Ascending aorta (tissue), 2 donors: ENCODE measurements at regions of chr1 and their contacts with region 1.

Region 1: GRCh38 chr1:109910123-109910962 is at the start of gene CSF1:
- DNase-seq: peak; percentile 55 to 88
- H3K4me3 ChIP-seq: peak within 1 kb of the TSS; percentile 64 to 82
- H3K27ac ChIP-seq: peak within 1 kb of the TSS; percentile 77 to 84
- H3K4me1 ChIP-seq: peaks cover 5 to 40% of the 10 kb centered on the region in 2 donors
- H3K27me3 ChIP-seq: no peaks in the 10 kb centered on the region
- CTCF ChIP-seq: no peak
- total RNA-seq, gene CSF1: 140 TPM

Region 2: DNA sequence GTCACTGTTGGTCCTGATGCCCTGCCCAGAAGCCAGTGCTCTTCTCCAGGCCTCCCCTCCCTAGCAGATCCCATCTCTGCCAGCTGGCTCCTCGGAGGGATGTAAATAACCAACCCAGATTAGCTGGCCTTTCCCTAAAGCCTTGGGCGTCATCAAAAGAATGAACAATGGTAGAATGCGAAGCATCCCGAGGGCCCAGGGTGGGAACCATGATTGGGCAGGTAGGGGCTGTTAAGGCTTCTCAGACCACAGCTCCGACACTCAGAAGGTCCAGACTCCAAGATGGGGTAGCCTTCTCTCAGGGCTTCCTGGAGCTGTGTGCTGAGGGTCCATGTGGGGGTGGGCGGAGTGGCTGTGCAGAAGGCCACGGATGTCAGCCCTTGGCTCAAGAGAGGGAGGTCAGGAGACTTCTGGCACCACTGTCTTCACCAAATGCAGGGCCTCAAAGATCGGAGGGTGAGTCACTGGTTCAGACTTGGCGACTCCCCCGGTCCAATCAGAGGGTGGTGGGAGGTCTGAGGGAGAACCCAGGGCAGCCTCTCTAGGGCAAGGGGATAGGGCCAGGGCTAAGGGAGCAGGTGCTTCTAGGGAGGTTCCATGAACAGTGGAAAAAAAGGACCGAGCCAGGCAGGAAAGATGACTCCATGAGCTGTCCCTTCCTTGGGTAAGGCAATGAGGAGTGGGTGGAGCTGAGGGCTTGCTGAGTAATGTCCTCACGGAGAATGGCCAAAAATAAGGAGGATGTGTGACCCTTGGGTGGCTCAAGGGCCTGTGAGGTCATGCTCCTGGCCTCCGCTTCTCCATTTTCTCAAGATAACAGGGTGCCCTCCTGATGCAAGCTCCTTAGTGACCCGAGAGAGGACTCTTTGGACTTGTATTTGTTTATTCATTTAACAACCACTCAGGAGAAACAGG is 88.3 kb before region 1 on chr1:
- intact Hi-C with region 1: loop called (anchors 2 kb)
- DNase-seq: peak; percentile 47 to 86
- H3K4me3 ChIP-seq: no peak overlapping the region
- H3K27ac ChIP-seq: peak overlapping the region; percentile 83 to 94
- H3K4me1 ChIP-seq: peaks cover 22 to 54% of the 10 kb centered on the region in 2 donors
- H3K27me3 ChIP-seq: no peaks in the 10 kb centered on the region
- CTCF ChIP-seq: no peak

Region 3: GRCh38 chr1:109877320-109877771 is 33.0 kb before region 1 on chr1:
- intact Hi-C with region 1: loop called (anchors 2 kb)
- DNase-seq: peak in 1 of 2 donors; percentile 89
- H3K4me3 ChIP-seq: peak overlapping the region in 1 of 2 donors; percentile 42
- H3K27ac ChIP-seq: peak overlapping the region; percentile 93 to 94
- H3K4me1 ChIP-seq: peaks cover 11 to 37% of the 10 kb centered on the region in 2 donors
- H3K27me3 ChIP-seq: no peaks in the 10 kb centered on the region
- CTCF ChIP-seq: peak; percentile 30 to 46 (median 37)

Region 4: DNA sequence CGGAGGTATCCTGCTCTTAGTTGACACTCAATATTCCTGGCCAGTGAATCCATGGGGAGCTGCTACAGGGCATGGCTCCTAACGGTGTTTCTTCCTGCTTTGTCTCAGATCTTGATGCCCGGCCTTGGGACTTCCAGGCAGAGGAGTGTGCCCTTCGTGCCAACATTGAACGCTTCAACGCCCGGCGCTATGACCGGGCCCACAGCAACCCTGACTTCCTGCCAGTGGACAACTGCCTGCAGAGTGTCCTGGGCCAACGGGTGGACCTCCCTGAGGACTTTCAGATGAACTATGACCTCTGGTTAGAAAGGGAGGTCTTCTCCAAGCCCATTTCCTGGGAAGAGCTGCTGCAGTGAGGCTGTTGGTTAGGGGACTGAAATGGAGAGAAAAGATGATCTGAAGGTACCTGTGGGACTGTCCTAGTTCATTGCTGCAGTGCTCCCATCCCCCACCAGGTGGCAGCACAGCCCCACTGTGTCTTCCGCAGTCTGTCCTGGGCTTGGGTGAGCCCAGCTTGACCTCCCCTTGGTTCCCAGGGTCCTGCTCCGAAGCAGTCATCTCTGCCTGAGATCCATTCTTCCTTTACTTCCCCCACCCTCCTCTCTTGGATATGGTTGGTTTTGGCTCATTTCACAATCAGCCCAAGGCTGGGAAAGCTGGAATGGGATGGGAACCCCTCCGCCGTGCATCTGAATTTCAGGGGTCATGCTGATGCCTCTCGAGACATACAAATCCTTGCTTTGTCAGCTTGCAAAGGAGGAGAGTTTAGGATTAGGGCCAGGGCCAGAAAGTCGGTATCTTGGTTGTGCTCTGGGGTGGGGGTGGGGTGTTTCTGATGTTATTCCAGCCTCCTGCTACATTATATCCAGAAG is 143.4 kb after region 1 on chr1:
- intact Hi-C with region 1: no loop called
- DNase-seq: peak in 1 of 2 donors; percentile 74
- H3K4me3 ChIP-seq: no peak overlapping the region
- H3K27ac ChIP-seq: no peak overlapping the region
- H3K4me1 ChIP-seq: no peaks in the 10 kb centered on the region
- H3K27me3 ChIP-seq: no peaks in the 10 kb centered on the region
- CTCF ChIP-seq: peak; percentile 72 to 94 (median 91)